Activated CD4-positive, alpha-beta memory T cell treated with anti-CD3 and anti-CD28 coated beads for 36 hours (primary cell): ENCODE measurements at regions of chr5 and their contacts with region 1.

Region 1: GRCh38 chr5:102681407-102681983 is 73.6 kb upstream of the PAM start:
- DNase-seq: peak; percentile 76
- H3K4me3 Mint-ChIP-seq: no peak overlapping the region
- H3K27ac Mint-ChIP-seq: no peak overlapping the region
- H3K4me1 Mint-ChIP-seq: no peaks in the 10 kb centered on the region
- H3K27me3 Mint-ChIP-seq: no peaks in the 10 kb centered on the region

Region 2: DNA sequence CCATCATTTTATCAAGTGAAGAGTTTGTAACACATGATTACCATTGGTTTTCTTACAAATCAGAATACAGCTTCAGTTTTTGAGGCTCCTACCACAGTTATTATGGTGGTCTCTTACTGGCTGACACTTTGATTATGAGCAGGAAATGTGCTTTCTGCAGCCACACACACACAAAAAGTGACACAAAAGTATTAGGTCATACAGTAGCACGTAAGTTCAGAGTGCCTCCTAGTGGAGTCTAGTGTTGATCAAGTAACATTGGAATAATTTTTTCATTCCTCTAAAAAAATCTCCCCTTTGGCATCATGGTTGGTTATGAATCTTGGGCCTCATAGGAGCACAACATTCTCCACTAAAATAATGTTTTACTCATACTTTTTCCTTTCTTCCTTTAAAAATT is 111.2 kb after region 1 on chr5:
- CTCF ChIA-PET with region 1: interaction called, 20 read pairs
- POLR2A ChIA-PET with region 1: no interaction called
- intact Hi-C with region 1: loop called (anchors 1 kb)
- DNase-seq: no peak
- H3K4me3 Mint-ChIP-seq: no peak overlapping the region
- H3K27ac Mint-ChIP-seq: no peak overlapping the region
- H3K4me1 Mint-ChIP-seq: peaks cover 14% of the 10 kb centered on the region
- H3K27me3 Mint-ChIP-seq: no peaks in the 10 kb centered on the region

Region 3: GRCh38 chr5:102845041-102845440 is 163.5 kb after region 1 on chr5:
- CTCF ChIA-PET with region 1: no interaction called
- POLR2A ChIA-PET with region 1: no interaction called
- intact Hi-C with region 1: no loop called
- DNase-seq: no peak
- H3K4me3 Mint-ChIP-seq: no peak overlapping the region
- H3K27ac Mint-ChIP-seq: no peak overlapping the region
- H3K4me1 Mint-ChIP-seq: no peaks in the 10 kb centered on the region
- H3K27me3 Mint-ChIP-seq: no peaks in the 10 kb centered on the region

Region 4: GRCh38 chr5:102971697-102972293 is 290.3 kb after region 1 on chr5:
- CTCF ChIA-PET with region 1: interaction called, 7 read pairs
- POLR2A ChIA-PET with region 1: no interaction called
- intact Hi-C with region 1: loop called (anchors 2 kb)
- DNase-seq: no peak
- H3K4me3 Mint-ChIP-seq: no peak overlapping the region
- H3K27ac Mint-ChIP-seq: no peak overlapping the region
- H3K4me1 Mint-ChIP-seq: no peaks in the 10 kb centered on the region
- H3K27me3 Mint-ChIP-seq: no peaks in the 10 kb centered on the region

Region 5: GRCh38 chr5:103041071-103041676 is 359.7 kb after region 1 on chr5:
- CTCF ChIA-PET with region 1: interaction called, 12 read pairs
- POLR2A ChIA-PET with region 1: no interaction called
- intact Hi-C with region 1: loop called (anchors 2 kb)
- DNase-seq: no peak
- H3K4me3 Mint-ChIP-seq: no peak overlapping the region
- H3K27ac Mint-ChIP-seq: no peak overlapping the region
- H3K4me1 Mint-ChIP-seq: no peaks in the 10 kb centered on the region
- H3K27me3 Mint-ChIP-seq: peaks cover 2% of the 10 kb centered on the region

Region 6: GRCh38 chr5:103166706-103167105 is 485.2 kb after region 1 on chr5:
- CTCF ChIA-PET with region 1: no interaction called
- POLR2A ChIA-PET with region 1: no interaction called
- intact Hi-C with region 1: no loop called
- DNase-seq: no peak
- H3K4me3 Mint-ChIP-seq: no peak overlapping the region
- H3K27ac Mint-ChIP-seq: no peak overlapping the region
- H3K4me1 Mint-ChIP-seq: no peaks in the 10 kb centered on the region
- H3K27me3 Mint-ChIP-seq: no peaks in the 10 kb centered on the region